ENCODE measurements at regions of chr19 and their contacts with region 1.

Region 1: DNA sequence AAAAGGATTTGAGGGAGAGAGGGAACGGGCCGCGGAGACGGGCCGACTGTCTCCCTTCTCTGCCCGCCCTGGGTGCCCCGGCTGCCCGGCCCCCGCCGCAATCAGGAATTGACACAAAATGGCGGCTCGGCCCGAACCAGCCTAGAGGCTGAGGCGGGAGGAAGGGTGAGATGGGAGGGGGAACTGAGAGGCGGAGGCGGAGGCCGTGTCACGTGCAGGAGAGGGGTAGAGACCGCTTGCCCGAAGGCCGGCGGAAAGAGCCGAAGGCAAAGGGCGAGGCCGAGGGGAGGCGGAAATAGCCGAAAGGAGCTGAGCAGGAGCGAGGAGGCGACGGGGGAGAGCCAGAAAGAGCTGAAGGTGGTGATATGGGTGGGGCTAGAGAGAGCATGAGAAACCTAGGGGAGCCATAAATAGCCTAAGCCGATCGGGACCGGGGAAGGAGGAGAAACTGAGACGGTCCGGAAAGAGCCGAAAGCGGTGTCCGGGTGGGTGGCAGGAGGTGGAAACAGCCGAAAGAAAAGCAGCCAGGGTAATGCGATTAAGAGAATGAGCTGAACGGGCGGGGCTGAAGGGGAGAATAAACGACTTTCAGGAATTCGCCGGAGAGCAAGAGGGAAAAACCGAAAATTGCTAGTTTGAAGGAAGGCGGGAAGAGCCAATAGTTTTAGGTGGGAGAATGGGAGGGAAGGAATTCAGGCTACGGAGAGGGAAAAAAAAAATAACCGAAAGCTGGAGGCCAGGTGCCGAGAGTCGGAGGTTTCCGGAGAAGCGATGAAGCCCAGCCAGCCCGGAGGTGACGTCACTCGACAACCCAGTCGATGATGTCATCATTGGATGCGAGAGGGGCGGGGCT is at the start of gene ZC3H4:
- DNase-seq: peak; percentile 100
- ATAC-seq: peak; percentile 94
- H3K4me3 Mint-ChIP-seq: peak within 1 kb of the TSS; percentile 91
- H3K27ac Mint-ChIP-seq: peak within 1 kb of the TSS; percentile 99
- H3K4me1 Mint-ChIP-seq: peaks cover 28% of the 10 kb centered on the region
- H3K27me3 Mint-ChIP-seq: no peaks in the 10 kb centered on the region
- CTCF ChIP-seq: no peak
- total RNA-seq, gene ZC3H4: 67.2 to 75.5 TPM (median 73.2 TPM) in 3 replicates

Region 2: GRCh38 chr19:47002107-47002766 is 111.0 kb before region 1 on chr19:
- CTCF ChIA-PET with region 1: no interaction called
- POLR2A ChIA-PET with region 1: no interaction called
- DNase-seq: peak; percentile 44
- ATAC-seq: peak; percentile 24; the same call in 1 of the 2 replicates
- H3K4me3 Mint-ChIP-seq: no peak overlapping the region
- H3K27ac Mint-ChIP-seq: no peak overlapping the region
- H3K4me1 Mint-ChIP-seq: peaks cover 21% of the 10 kb centered on the region
- H3K27me3 Mint-ChIP-seq: no peaks in the 10 kb centered on the region
- CTCF ChIP-seq: no peak

Region 3: DNA sequence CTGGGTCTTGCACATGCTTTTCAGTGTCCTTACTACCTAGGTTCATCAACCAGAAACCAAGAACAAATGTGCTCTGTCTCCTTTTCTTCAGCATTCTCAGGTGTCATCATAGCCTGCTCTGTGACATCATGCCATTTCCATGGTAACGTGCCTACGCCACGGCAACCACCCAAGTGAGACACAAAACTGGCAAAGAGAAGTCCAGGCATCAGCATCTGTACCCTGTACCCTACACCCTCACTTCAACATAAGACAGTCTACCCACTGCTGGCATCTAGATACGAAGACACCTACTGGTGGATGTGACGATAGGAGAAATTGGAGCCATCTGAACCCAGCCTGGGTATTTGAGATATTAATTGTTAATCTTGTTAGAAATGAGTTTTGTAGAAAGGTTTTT is 12.9 kb before region 1 on chr19:
- CTCF ChIA-PET with region 1: interaction called, 3 read pairs
- POLR2A ChIA-PET with region 1: interaction called, 11 read pairs
- DNase-seq: no peak
- ATAC-seq: no peak
- H3K4me3 Mint-ChIP-seq: no peak overlapping the region
- H3K27ac Mint-ChIP-seq: peak overlapping the region; percentile 61
- H3K4me1 Mint-ChIP-seq: peaks cover 51% of the 10 kb centered on the region
- H3K27me3 Mint-ChIP-seq: no peaks in the 10 kb centered on the region
- CTCF ChIP-seq: no peak

Region 4: DNA sequence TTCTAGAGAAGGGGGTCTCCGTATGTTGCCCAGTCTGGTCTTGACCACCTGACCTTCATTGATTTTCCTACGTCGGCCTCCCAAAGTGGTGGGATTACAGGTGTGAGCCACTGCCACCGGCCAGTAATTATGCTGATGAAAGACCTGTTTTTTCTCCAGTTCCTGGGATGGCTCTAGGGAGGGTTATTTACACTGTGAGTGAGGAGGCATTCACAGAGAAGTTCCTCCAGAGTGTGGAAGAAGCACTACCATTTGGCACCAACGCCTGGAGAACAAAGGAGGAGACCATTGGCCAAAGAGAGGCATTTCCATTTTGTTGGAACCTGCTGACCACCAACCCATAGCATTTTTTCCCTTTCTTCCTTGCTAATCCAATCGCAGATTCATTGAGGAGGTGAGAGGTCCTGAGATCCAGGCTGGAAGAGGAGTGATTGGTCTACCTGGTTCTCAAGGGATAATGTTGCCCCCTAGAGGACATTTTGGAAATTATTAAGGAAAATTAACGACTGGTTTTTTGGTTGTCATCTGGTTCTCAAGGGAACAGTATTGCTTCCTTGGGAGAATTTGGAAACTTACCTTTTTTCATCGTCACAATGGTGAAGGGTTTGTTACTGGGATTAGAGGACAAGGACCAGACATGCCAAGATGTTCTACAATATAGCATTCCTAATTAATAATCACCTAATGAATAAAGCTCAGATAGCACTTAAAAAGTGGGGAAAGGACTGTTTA is 11.9 kb after region 1 on chr19:
- CTCF ChIA-PET with region 1: interaction called, 22 read pairs
- POLR2A ChIA-PET with region 1: interaction called, 11 read pairs
- DNase-seq: no peak
- ATAC-seq: peak; percentile 93
- H3K4me3 Mint-ChIP-seq: no peak overlapping the region
- H3K27ac Mint-ChIP-seq: peak overlapping the region; percentile 69
- H3K4me1 Mint-ChIP-seq: peaks cover 6% of the 10 kb centered on the region
- H3K27me3 Mint-ChIP-seq: peaks cover 7% of the 10 kb centered on the region
- CTCF ChIP-seq: peak; percentile 55

Region 5: DNA sequence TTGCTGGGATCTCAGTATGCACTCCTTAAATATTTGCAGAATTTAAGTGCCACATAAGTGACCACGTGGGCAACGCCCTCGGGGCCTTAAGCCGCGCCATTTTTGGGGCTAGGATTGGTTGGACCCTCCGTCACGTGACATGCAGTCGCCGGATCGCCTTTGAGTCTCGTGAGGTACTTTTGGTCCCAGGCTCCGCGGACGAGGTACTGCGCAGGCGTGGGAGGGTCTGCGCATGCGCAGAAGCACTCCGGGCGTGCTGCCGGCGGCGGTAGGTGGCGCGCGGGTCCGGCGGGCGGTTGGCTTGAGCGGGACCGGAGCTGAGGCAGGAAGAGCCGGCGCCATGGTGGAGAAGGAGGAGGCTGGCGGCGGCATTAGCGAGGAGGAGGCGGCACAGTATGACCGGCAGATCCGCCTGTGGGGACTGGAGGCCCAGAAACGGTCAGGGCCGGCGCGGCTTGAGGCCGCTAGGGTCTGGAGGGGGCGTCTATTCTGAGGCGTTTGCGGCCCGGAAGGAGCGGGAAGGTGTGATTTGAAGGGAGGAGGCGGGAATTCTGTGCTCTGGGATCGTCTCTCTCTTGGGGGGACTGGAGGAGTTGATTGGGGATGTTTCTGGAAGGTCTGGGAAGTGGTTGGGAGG is 17.5 kb after region 1 on chr19 and contains the start of gene SAE1:
- CTCF ChIA-PET with region 1: interaction called, 22 read pairs
- POLR2A ChIA-PET with region 1: interaction called, 23 read pairs
- DNase-seq: peak; percentile 97
- ATAC-seq: peak; percentile 88
- H3K4me3 Mint-ChIP-seq: peak within 1 kb of the TSS; percentile 96
- H3K27ac Mint-ChIP-seq: peak within 1 kb of the TSS; percentile 95
- H3K4me1 Mint-ChIP-seq: peaks cover 38% of the 10 kb centered on the region
- H3K27me3 Mint-ChIP-seq: peaks cover 11% of the 10 kb centered on the region
- CTCF ChIP-seq: no peak
- total RNA-seq, gene SAE1: 215 to 224 TPM (median 221 TPM) in 3 replicates

Region 6: GRCh38 chr19:47157431-47158321 is 44.5 kb after region 1 on chr19:
- CTCF ChIA-PET with region 1: no interaction called
- POLR2A ChIA-PET with region 1: interaction called, 10 read pairs
- DNase-seq: peak; percentile 72
- ATAC-seq: peak; percentile 92
- H3K4me3 Mint-ChIP-seq: peak overlapping the region; percentile 51
- H3K27ac Mint-ChIP-seq: peak overlapping the region; percentile 99
- H3K4me1 Mint-ChIP-seq: peaks cover 43% of the 10 kb centered on the region
- H3K27me3 Mint-ChIP-seq: no peaks in the 10 kb centered on the region
- CTCF ChIP-seq: no peak